Ascending aorta (tissue), 2 donors: ENCODE measurements at regions of chr16 and their contacts with region 1.

Region 1: GRCh38 chr16:4330277-4330874 is 14.5 kb downstream of the GLIS2 start:
- DNase-seq: peak in 1 of 2 donors; percentile 91
- H3K4me3 ChIP-seq: no peak overlapping the region
- H3K27ac ChIP-seq: peak overlapping the region; percentile 21 to 94
- H3K4me1 ChIP-seq: peaks cover 27 to 39% of the 10 kb centered on the region in 2 donors
- H3K27me3 ChIP-seq: no peaks in the 10 kb centered on the region
- CTCF ChIP-seq: peak; percentile 89 to 97 (median 95)

Region 2: DNA sequence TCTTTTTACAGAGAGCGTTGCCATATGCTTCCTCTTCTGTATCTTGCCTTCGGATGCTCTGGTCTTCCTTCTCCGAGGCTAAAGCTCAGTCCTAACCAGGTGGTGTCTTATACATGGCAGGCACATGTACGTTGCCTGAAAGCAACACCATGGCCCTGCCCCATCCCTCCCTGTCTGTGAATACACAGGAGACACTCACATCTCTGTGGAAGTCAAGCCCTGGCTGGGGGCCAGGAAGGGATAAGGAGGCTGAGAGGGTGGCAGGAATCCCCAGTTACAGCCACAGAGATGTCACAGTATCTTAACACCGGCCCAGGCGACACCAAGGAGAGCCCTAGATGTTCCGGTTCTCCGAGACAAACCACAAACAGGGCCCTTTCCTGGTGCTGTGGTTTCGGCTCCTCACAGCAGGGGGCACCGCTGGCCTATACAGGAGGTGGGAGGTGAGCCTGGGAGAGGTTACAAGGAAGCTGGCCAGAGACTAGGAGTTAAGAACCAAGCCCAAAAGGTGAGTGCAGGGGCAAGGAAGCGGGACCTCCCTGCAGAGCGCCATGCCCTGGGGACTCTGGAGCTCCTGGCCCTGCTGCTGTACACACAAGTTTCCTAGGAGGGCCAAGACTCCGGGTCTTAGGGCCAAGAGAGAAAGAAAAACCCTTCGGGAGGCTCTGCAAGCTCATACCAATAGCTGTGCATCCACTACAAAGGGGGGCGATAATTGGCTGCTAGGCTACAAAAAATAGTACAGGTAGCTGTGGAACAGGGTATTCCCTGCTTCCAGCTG is 130.2 kb before region 1 on chr16:
- intact Hi-C with region 1: loop called (anchors 1 kb)
- DNase-seq: peak; percentile 23 to 84
- H3K4me3 ChIP-seq: no peak overlapping the region
- H3K27ac ChIP-seq: no peak overlapping the region
- H3K4me1 ChIP-seq: peaks cover 0 to 2% of the 10 kb centered on the region in 2 donors
- H3K27me3 ChIP-seq: no peaks in the 10 kb centered on the region
- CTCF ChIP-seq: peak; percentile 80 to 86 (median 84)

Region 3: DNA sequence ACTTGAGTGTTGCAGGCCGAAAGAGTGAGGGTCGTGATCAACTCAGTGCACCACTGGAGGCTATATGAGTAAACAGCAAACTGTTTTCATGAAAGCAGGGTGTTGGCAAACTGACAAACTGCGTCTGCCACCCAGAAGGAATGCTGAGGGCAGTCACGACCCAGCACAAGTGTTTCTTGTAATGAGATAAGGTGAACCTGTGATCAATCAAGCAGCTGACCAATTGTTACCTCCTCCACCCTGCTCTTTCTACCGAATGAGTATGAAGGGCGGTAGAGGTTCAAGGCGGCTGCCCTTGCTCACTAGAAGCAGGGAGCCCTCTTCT is 83.0 kb before region 1 on chr16:
- intact Hi-C with region 1: no loop called
- DNase-seq: no peak
- H3K4me3 ChIP-seq: no peak overlapping the region
- H3K27ac ChIP-seq: no peak overlapping the region
- H3K4me1 ChIP-seq: no peaks in the 10 kb centered on the region
- H3K27me3 ChIP-seq: no peaks in the 10 kb centered on the region
- CTCF ChIP-seq: no peak

Region 4: DNA sequence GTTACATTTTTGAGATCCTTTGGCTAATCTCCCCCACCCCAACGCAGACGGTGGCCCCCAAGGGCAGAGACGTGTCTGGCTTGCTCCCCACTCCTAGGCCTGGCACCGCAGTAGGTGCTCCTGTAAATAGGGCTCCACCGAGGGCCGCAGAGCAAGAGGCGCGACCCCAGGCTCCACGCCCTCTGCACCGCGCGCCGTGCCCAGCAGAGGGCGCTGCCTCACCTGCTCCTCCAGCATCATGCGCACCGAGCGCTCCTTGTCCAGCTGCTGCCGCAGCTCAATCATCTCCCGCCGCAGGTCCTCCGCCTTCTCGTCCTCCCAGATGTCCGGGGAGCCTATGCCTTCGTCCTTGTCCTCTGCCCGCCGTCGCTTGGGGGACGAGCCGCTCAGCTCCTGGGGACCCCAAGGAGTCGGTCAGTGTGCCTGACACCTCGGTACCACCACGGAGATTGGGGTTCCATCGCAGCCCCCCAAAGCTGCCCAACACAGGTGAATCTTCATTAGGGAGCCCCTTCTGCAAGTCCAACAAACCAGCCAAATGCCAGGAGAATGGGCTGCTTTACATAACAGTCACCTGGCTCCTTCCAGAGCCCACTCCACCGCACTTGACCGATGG is 68.7 kb before region 1 on chr16:
- intact Hi-C with region 1: loop called (anchors 2 kb)
- DNase-seq: no peak
- H3K4me3 ChIP-seq: no peak overlapping the region
- H3K27ac ChIP-seq: no peak overlapping the region
- H3K4me1 ChIP-seq: no peaks in the 10 kb centered on the region
- H3K27me3 ChIP-seq: no peaks in the 10 kb centered on the region
- CTCF ChIP-seq: peak; percentile 70 to 72 (median 72)

Region 5: GRCh38 chr16:4288148-4288921 is 42.0 kb before region 1 on chr16:
- intact Hi-C with region 1: loop called (anchors 1 kb)
- DNase-seq: peak in 1 of 2 donors; percentile 83
- H3K4me3 ChIP-seq: no peak overlapping the region
- H3K27ac ChIP-seq: no peak overlapping the region
- H3K4me1 ChIP-seq: peaks cover 4 to 17% of the 10 kb centered on the region in 2 donors
- H3K27me3 ChIP-seq: no peaks in the 10 kb centered on the region
- CTCF ChIP-seq: peak; percentile 91 to 97 (median 92)

Region 6: DNA sequence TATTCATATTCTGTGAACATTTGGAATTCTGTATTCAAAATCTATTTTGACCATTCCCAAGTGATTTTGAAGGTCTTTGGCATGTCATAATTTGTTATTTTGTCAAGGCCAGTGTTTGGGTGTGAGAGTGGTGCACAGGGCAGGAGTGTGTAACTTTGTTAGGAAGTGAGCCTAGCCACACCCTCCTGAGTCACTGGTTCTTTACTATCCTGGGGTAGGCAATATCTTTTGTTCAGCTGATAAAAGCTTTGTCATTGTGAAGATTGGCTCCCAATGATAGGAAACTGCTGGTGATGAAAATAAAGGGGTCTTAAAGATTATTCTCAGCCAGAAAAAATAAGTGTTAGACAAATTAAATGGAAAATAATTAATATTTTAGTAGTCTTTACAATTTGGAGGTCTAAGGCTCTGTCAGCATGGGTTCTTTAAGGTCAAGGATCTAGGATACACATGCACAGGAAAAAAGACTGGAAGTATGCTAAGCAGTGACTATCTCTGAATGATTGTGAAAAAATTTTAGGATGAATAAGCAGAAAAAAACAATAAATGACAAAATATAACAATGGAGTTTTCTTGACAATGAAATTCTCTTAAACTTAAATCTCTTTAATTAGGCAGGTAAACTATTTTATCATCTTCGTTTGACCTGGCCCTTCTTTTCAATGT is 522.0 kb after region 1 on chr16:
- intact Hi-C with region 1: no loop called
- DNase-seq: no peak
- H3K4me3 ChIP-seq: no peak overlapping the region
- H3K27ac ChIP-seq: no peak overlapping the region
- H3K4me1 ChIP-seq: peaks cover 6 to 14% of the 10 kb centered on the region in 2 donors
- H3K27me3 ChIP-seq: no peaks in the 10 kb centered on the region
- CTCF ChIP-seq: no peak